BJ (cell line): ENCODE measurements at regions of chr1 and their contacts with region 1.

Region 1: GRCh38 chr1:99445486-99445885 is 181.2 kb downstream of the PLPPR4 start:
- DNase-seq: peak; percentile 87
- H3K4me3 ChIP-seq: no peak overlapping the region
- H3K27me3 ChIP-seq: no peaks in the 10 kb centered on the region
- CTCF ChIP-seq: no peak

Region 2: GRCh38 chr1:99429754-99430153 is 15.7 kb before region 1 on chr1:
- CTCF ChIA-PET with region 1: no interaction called
- POLR2A ChIA-PET with region 1: no interaction called
- DNase-seq: no peak
- H3K4me3 ChIP-seq: no peak overlapping the region
- H3K27me3 ChIP-seq: no peaks in the 10 kb centered on the region
- CTCF ChIP-seq: no peak

Region 3: DNA sequence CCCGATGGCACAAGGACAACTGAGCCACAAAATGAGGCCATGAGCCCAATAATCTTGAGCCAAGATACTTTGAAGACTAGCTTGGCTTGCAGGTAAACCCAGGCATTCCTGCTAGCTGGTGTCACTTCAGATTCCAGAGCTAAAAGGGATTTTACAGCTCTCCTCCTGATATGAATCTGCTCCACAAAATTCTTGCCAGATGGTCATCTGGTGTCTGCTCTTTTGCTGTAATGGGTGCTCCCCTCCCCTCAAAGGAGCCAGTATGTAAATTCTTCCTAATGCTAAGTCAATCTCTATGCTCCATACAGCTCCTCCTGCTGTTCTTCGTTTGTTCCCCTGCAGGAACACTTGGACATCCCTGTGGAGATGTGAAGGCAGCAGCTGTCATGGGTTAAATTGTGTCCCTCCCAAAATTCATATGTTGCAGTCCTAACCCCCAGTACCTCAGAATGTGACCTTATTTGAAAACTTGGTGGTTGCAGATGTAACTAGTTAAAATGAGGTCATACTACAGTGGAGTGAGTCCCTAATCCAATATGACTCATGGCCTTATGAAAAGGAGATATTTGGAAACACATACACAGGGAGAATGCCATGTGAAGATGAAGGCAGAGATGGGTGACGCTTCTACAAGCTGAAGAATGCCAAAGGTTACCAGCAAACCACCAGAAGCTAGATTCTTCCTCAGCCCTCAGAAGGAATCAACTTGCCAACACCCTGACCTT is 19.9 kb after region 1 on chr1:
- CTCF ChIA-PET with region 1: interaction called, 4 read pairs
- POLR2A ChIA-PET with region 1: interaction called, 10 read pairs
- DNase-seq: peak; percentile 93
- H3K4me3 ChIP-seq: no peak overlapping the region
- H3K27me3 ChIP-seq: no peaks in the 10 kb centered on the region
- CTCF ChIP-seq: peak; percentile 45; the same call in 1 of the 2 replicates